Heart left ventricle (tissue), 16 donors: ENCODE measurements at regions of chr10 and their contacts with region 1.

Region 1: GRCh38 chr10:11024596-11024995 is 6.9 kb downstream of the CELF2 start:
- DNase-seq: no peak
- ATAC-seq: peak in 3 of 4 donors; percentile 57 to 86 (median 83)
- H3K4me3 ChIP-seq: no peak overlapping the region
- H3K27ac ChIP-seq: peak overlapping the region in 5 of 12 donors; percentile 4 to 61 (median 13)
- H3K4me1 ChIP-seq: peaks cover 0 to 77% (median 26%) of the 10 kb centered on the region in 12 donors
- H3K27me3 ChIP-seq: peaks cover 0 to 11% (median 0%) of the 10 kb centered on the region in 9 donors
- CTCF ChIP-seq: no peak
- POLR2A ChIP-seq: no peak

Region 2: DNA sequence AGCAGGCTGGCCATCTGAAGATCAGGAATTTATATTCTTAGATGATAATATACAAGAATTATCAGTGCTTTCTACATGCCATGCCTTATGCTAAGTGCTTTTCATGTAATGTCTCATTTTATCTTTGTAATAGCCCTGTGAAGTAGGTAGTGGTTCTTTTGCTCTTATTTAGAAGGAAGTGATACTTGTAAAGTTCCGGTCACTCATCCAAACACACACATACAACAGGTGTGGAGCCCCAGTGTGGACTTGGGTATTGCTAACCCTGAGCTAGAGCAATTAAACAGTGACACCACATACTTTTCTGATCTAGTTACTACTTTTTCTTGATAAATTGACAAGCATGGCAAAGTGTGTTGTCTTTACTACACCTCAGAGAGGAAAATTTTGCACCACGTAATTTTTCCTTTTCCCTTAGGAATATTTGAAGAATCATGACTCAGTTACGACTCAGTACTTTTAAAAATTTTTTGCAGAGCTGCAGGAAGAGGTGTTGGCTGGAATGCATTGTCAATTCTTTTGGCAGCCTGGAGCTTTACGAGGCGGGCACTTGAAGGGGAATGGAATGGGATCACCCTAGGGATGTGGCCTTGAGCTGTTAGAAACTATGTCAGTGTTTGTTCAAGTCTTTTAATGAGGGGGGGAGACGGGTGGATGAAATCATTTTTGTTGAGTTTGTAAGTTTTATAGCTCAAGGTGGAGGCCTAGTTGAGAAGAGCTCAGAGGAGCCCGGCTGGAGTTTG is 219.4 kb before region 1 on chr10:
- intact Hi-C with region 1: loop called in 4 of 10 experiments (anchors 5 to 10 kb)
- DNase-seq: peak in 1 of 5 donors; percentile 46
- ATAC-seq: peak in 3 of 4 donors; percentile 52 to 63 (median 63)
- H3K4me3 ChIP-seq: no peak overlapping the region
- H3K27ac ChIP-seq: peak overlapping the region in 7 of 12 donors; percentile 16 to 70 (median 41)
- H3K4me1 ChIP-seq: peaks cover 0 to 43% (median 18%) of the 10 kb centered on the region in 12 donors
- H3K27me3 ChIP-seq: no peaks in the 10 kb centered on the region
- CTCF ChIP-seq: no peak
- POLR2A ChIP-seq: no peak

Region 3: DNA sequence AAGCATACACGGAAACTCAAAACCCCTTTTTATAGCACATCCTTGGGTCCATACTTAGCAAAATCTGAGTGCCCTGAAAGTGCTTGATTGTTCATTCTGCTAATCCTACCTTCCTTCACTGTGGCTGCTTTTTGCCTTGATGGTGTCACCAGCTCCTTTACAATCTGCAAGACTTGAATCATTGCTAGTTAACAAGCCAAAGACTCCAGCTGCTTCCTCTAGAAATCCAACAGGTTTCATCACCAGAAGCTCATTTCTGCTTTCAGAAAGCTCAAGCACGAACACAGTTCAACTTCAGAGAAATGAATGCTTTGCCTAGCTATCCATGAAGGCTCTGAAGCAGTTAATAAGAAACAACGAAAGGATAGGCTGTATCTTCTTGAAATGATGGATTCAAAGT is 548.9 kb after region 1 on chr10:
- intact Hi-C with region 1: no loop called
- DNase-seq: no peak
- ATAC-seq: peak in 2 of 4 donors; percentile 27 to 43
- H3K4me3 ChIP-seq: peak overlapping the region in 1 of 12 donors; percentile 9
- H3K27ac ChIP-seq: no peak overlapping the region
- H3K4me1 ChIP-seq: peaks cover 0 to 33% (median 6%) of the 10 kb centered on the region in 12 donors
- H3K27me3 ChIP-seq: no peaks in the 10 kb centered on the region
- CTCF ChIP-seq: no peak
- POLR2A ChIP-seq: no peak